Activated CD8-positive, alpha-beta memory T cell treated with anti-CD3 and anti-CD28 coated beads, Interleukin-2, amount 10 ng/mL, durations not matched to agents 7 days and 5 days (primary cell): ENCODE measurements at regions of chr13 and their contacts with region 1.

Region 1: DNA sequence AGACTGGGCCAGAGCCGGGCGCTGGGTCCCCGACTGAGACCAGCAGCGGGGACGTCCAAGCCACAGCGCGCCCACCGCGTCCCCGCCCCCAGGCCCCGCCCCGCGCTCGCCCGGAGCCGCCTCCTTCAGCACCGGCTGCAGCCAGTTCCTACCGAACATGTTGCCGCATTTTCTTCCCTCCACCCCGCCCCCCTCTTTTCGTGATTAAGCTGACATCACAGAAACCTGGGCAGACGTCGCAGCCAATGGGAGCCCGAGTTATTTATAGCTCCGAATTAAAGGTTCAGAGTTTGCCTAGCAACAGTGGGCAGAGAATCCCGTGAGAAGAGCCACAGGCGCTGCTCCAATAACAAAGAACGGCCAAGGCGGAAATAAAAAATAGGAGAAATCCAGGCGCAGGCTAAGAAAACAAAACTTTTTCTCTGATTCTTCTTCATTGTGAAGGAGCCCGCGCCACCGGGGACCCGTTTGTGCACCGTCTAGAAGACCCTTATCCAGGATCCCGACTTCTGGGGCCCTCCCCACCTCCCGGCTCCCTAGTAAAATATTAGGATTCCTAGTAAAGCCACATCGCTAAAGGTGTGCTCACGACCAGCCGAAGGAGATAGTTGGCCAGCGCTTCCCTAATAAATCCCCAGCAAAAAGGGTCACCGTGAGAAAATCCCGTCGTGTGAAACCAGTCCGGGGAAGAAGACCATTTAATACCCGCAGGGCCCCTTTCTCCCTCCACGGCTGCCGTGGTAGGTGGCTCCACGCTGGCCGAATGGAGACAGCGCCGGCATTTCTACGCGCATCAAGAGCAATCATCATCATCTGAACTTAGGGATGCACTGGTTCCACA is 61.7 kb downstream of the SERP2 start:
- DNase-seq: peak; percentile 93
- ATAC-seq: peak; percentile 90
- H3K4me3 Mint-ChIP-seq: peak overlapping the region; percentile 73
- H3K27ac Mint-ChIP-seq: peak overlapping the region; percentile 44
- H3K4me1 Mint-ChIP-seq: peaks cover 15% of the 10 kb centered on the region
- H3K27me3 Mint-ChIP-seq: peaks cover 36% of the 10 kb centered on the region

Region 2: GRCh38 chr13:43905435-43906031 is 529.8 kb before region 1 on chr13:
- CTCF ChIA-PET with region 1: interaction called, 38 read pairs
- DNase-seq: no peak
- ATAC-seq: peak; percentile 60
- H3K4me3 Mint-ChIP-seq: no peak overlapping the region
- H3K27ac Mint-ChIP-seq: no peak overlapping the region
- H3K4me1 Mint-ChIP-seq: no peaks in the 10 kb centered on the region
- H3K27me3 Mint-ChIP-seq: peaks cover 38% of the 10 kb centered on the region

Region 3: GRCh38 chr13:44191504-44192171 is 243.7 kb before region 1 on chr13:
- CTCF ChIA-PET with region 1: interaction called, 25 read pairs
- DNase-seq: peak; percentile 44
- ATAC-seq: peak; percentile 63
- H3K4me3 Mint-ChIP-seq: peak overlapping the region; percentile 5
- H3K27ac Mint-ChIP-seq: no peak overlapping the region
- H3K4me1 Mint-ChIP-seq: peaks cover 26% of the 10 kb centered on the region
- H3K27me3 Mint-ChIP-seq: peaks cover 70% of the 10 kb centered on the region

Region 4: DNA sequence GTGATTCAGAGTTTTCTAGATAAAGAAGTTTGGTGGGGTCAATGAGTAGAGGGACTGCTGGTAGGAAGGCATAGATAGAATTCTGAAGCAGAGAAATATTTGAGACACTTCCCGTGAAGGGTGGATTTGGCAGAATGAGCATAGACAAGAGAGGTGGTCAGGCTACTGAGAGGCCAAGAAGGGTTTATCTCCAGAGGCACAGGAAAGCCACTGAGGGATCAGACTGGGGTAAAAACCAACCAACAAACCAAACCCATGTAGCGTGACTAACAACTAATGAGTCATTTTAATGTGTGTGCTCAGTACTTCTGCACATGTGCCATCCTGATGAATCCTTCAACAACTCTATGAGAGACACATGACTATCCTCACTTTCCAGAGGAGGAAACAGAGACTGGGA is 121.7 kb before region 1 on chr13:
- CTCF ChIA-PET with region 1: no interaction called
- DNase-seq: no peak
- ATAC-seq: no peak
- H3K4me3 Mint-ChIP-seq: no peak overlapping the region
- H3K27ac Mint-ChIP-seq: no peak overlapping the region
- H3K4me1 Mint-ChIP-seq: peaks cover 6% of the 10 kb centered on the region
- H3K27me3 Mint-ChIP-seq: peaks cover 57% of the 10 kb centered on the region